Activated CD4-positive, alpha-beta memory T cell treated with anti-CD3 and anti-CD28 coated beads, Interleukin-2, amount 10 ng/mL, durations not matched to agents 7 days and 5 days (primary cell): ENCODE measurements at regions of chr6 and their contacts with region 1.

Region 1: GRCh38 chr6:34248727-34249551 is at the start of gene SMIM29:
- DNase-seq: peak; percentile 98
- H3K4me3 Mint-ChIP-seq: peak within 1 kb of the TSS; percentile 95
- H3K27ac Mint-ChIP-seq: peak within 1 kb of the TSS; percentile 94
- H3K4me1 Mint-ChIP-seq: peaks cover 53% of the 10 kb centered on the region
- H3K27me3 Mint-ChIP-seq: peaks cover 3% of the 10 kb centered on the region
- total RNA-seq, gene SMIM29: 38.3 to 38.4 TPM

Region 2: DNA sequence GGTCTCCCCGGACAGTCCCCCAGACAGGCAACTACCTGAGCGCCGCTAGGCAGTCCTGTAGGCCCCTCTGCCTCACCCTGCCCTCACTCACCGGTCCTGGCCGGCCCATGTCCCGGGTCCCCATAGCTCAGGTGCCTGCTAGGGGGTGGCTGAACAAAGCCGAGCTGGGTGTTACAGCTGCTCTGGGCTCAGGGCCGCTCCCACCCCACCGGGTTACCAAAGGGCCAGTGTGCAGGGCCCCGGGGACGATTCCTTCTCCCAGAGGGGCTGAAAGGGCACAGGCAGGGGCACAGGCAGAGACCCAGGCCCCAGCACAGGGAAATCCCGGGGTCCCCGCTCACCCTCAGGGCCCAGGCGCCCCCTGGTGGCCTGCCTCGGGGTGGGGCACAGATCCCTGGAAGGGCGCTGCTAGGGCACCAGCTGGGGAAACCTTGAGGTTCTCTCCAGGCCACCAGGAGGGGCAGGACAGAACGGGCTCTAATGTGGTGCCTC is 221.4 kb before region 1 on chr6:
- CTCF ChIA-PET with region 1: no interaction called
- POLR2A ChIA-PET with region 1: no interaction called
- DNase-seq: peak; percentile 70
- H3K4me3 Mint-ChIP-seq: no peak overlapping the region
- H3K27ac Mint-ChIP-seq: no peak overlapping the region
- H3K4me1 Mint-ChIP-seq: no peaks in the 10 kb centered on the region
- H3K27me3 Mint-ChIP-seq: peaks cover 2% of the 10 kb centered on the region

Region 3: DNA sequence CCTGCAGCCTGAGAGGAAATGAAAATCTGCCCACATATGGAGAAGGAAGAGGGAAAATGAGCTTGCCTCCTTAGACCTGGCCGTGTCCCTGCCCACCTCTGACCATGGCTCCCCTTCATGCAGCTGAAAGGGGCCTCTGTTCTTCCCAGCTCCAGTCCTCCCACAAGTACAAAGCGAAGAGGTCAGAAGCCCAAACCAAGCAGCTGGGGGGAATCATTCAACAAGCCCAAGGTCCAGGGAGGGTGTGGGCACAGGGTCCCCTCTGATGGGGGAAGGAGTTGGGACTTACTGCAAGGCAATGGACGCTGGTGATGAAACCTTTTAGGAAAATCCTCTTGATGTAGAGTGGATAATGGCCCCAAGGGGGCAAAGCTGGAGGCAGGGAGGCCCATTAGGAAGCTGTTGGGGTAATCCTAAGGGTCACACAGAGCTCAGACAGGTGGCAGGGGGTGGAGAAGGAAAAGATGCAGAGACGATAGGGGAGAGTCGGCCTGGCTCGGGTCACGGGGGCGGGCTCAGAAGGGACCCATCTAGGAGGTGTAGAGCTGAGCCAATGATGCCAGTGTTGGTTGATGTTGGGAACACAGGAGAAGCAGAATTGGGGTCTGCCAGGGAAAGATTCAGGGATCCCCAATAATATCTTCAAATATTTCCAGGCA is 87.0 kb before region 1 on chr6:
- CTCF ChIA-PET with region 1: interaction called, 14 read pairs
- POLR2A ChIA-PET with region 1: interaction called, 4 read pairs
- DNase-seq: no peak
- H3K4me3 Mint-ChIP-seq: no peak overlapping the region
- H3K27ac Mint-ChIP-seq: no peak overlapping the region
- H3K4me1 Mint-ChIP-seq: no peaks in the 10 kb centered on the region
- H3K27me3 Mint-ChIP-seq: peaks cover 28% of the 10 kb centered on the region

Region 4: GRCh38 chr6:34223956-34224940 is 24.7 kb before region 1 on chr6:
- CTCF ChIA-PET with region 1: interaction called, 9 read pairs
- POLR2A ChIA-PET with region 1: interaction called, 15 read pairs
- DNase-seq: peak; percentile 94
- H3K4me3 Mint-ChIP-seq: peak overlapping the region; percentile 64
- H3K27ac Mint-ChIP-seq: peak overlapping the region; percentile 59
- H3K4me1 Mint-ChIP-seq: peaks cover 32% of the 10 kb centered on the region
- H3K27me3 Mint-ChIP-seq: peaks cover 3% of the 10 kb centered on the region

Region 5: DNA sequence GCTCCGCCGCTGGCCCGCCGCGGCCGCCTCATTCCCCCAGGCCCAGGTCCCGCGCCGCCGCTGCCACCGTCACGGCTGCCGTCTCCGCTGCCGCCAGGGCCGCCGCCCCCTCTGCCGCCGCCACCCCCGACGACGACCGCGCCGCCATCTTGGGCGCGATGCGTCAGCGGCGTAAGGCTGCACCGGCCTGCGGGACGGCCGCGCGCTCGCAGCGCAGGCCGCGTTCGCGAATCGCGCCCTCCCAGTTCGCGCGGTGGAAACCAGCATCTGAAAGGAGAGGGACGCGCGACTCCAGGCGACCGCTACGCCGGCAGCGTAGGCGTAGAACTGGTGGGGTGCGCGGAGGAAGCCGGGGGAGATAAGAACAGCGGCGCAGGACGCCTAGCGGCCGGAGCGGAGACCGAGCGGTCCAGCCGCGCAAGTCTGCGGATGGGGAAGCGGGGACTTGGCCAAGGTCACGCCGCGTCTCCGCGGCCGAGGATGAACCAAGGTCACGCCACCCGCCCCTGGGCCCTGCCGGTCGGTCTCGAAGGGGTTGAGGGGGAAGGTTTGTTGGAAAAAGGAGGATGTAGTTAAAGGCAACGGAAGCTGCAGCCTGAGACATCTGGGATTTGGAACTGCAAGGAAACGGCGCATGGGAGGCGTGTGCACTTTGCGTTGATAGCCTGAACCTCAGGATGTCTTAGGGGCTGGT is 143.7 kb after region 1 on chr6 and contains the start of gene NUDT3:
- CTCF ChIA-PET with region 1: interaction called, 35 read pairs
- POLR2A ChIA-PET with region 1: interaction called, 19 read pairs
- DNase-seq: peak; percentile 95
- H3K4me3 Mint-ChIP-seq: peak within 1 kb of the TSS; percentile 58
- H3K27ac Mint-ChIP-seq: peak within 1 kb of the TSS; percentile 83
- H3K4me1 Mint-ChIP-seq: peaks cover 17% of the 10 kb centered on the region
- H3K27me3 Mint-ChIP-seq: no peaks in the 10 kb centered on the region
- total RNA-seq, gene NUDT3: 9.9 to 10.0 TPM

Region 6: DNA sequence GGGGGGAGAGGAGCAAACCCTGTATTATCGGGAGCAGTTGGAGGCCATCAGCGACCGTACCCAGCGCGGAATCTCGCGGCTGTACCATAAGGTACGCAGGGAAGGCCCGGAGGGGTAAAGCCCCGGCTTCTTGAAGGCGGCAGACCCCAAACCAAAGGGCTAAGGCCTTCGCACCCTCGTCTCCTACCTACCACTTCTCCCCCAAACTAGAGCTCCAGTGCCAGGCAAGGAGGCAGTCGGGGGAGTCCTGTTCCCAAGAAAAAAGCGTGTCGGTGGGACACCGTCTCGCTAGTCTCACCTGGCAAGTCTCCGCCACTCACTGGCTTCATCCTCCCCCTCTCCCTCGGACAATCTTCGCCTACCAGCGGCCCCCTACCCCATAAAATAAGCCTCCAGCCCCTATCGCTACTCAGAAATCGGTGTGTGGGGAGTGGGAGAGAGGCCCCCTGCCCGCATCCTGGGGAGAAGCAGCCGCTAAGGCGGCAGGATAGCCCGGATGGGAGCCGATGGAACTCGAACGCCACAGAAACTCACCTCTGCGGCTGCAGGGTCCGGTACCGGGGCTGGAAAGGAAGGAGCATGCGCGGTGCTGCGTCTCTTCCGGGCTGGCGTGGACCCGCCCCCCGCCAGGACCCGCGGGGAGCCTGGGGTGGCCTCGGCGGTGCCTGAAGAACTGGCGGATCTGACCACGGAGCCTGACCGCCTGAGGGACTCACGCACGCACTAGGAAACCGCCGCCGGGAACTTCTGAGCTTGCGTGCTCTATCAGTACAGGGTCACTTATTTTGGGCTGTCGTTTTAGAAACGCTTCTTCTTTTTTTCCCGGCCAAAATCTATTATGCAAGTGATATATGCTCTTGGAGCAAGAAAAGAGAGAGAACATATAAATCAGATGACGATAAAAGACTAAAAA is 176.8 kb after region 1 on chr6 and contains the start of gene RPS10:
- CTCF ChIA-PET with region 1: interaction called, 24 read pairs
- POLR2A ChIA-PET with region 1: interaction called, 22 read pairs
- DNase-seq: peak; percentile 90
- H3K4me3 Mint-ChIP-seq: peak within 1 kb of the TSS; percentile 97
- H3K27ac Mint-ChIP-seq: peak within 1 kb of the TSS; percentile 93
- H3K4me1 Mint-ChIP-seq: peaks cover 40% of the 10 kb centered on the region
- H3K27me3 Mint-ChIP-seq: peaks cover 8% of the 10 kb centered on the region
- total RNA-seq, gene RPS10: 1,296 to 1,320 TPM

Region 7: DNA sequence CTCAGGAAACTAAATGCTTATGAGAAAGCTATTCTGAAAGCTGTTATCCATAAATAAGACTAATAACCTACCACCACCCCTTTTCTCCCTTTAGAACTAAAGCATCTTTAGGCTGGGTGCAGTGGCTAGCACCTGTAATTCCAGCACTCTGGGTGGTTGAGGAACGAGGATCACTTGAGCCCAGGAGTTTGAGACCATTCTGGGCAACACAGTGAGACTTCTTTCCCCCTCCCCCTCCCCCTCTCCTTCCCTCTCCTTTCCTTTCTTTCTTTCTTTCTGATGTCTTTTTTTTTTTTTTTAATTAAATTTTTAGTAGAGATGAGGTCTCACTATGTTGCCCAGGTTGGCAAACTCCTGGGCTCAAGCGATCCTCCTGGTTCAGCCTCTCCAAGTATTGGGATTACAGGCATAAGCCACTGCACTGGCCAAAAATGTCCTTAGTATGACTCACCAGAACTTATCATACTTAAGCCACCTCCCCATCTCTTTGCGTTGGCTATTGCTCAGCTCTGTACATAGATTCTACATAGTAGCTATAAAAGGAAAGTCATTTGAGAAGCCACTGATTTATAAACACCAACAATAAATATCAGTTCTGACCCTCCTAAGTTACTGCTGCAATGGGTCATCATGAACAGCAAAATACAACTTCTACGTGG is 362.0 kb after region 1 on chr6:
- CTCF ChIA-PET with region 1: interaction called, 19 read pairs
- POLR2A ChIA-PET with region 1: interaction called, 6 read pairs
- DNase-seq: no peak
- H3K4me3 Mint-ChIP-seq: no peak overlapping the region
- H3K27ac Mint-ChIP-seq: no peak overlapping the region
- H3K4me1 Mint-ChIP-seq: peaks cover 25% of the 10 kb centered on the region
- H3K27me3 Mint-ChIP-seq: no peaks in the 10 kb centered on the region